T-cell (primary cell): ENCODE measurements at regions of chr15 and their contacts with region 1.

Region 1: DNA sequence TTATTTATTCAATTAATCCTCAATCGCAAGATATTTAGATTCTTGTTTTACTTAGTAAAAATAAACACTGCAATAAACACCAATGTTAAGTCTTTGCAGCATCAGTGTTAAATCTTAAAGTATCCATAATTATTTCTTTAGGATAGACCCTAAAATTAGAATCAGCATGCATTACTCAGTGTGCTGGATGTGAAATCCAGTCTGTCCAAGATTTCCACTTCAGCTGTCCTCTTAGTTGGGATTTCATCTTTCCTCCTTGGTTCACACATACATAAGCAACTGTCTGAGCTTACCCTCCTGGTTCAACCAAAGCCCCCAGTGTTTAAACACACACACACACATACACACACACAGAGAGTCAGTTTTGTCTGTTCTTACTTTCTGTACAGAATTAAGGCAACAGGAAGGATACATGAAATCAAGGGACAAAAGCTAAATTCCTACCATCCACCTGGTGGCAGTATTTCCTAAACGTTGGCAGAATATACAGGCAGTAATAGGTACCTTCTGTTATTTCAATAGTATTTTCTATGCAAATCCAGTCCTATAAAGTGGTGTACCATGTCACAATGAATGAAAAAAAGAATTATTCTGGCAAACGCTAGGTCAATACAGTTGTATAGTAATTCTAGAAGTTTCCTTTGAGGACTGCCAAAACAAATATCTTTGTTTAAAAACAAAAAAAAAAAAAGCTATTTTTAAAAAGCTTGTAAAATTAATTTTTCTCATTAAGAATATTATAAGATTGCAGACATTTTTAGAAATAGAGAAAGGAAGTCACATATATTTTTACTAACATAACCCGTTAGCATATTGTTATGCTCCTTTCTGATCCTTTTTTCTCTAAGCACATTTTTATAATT is 27.3 kb upstream of the DMXL2 start:
- DNase-seq: peak in 29 of 35 experiments; percentile 0 to 86 (median 29)
- ATAC-seq: peak; percentile 57 to 82 (median 74)
- H3K4me3 ChIP-seq: no peak overlapping the region
- H3K4me3 Mint-ChIP-seq: no peak overlapping the region
- H3K27ac ChIP-seq: no peak overlapping the region
- H3K27ac Mint-ChIP-seq: no peak overlapping the region
- H3K4me1 ChIP-seq: no peaks in the 10 kb centered on the region
- H3K4me1 Mint-ChIP-seq: no peaks in the 10 kb centered on the region
- H3K27me3 ChIP-seq: no peaks in the 10 kb centered on the region
- H3K27me3 Mint-ChIP-seq: peaks cover 0 to 5% of the 10 kb centered on the region in 2 donors

Region 2: DNA sequence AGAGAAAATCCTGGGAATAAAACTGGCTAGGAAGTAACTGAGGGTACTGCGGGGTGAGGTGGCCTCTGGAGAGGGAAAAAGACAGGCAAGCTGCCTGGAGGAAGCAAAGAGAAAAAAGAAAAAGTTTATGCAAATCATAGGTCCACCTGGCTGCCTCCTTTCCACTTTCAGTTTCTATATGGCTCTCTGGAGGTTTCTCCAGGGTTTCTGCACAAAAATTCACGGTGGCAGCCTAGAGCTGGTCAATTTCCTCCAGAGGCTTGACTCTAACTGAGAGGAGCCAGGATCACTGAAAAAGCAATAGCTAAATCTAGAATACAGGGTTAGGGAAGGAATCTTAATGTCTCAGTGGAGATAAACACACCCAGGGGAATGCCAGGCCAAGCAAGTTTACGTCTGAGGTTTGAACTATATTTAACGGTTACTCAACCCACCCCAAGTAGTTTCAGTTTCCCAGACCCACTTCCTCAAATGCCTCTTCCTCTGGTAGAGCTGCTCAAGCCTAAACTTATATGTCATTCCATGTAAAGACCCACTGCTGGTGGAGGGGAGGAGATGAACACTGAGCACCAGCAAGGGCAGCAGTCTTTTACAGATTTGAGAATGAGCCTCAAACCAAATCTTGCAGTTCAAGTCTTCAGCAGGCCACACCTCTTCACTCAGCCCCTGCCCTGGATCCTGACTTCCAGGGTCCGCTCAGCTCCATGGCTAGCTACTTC is 81.8 kb after region 1 on chr15:
- CTCF ChIA-PET with region 1: interaction called, 6 to 12 read pairs
- POLR2A ChIA-PET with region 1: interaction called in 1 of 2 experiments, 3 read pairs
- DNase-seq: peak in 28 of 35 experiments; percentile 7 to 80 (median 36)
- ATAC-seq: peak; percentile 65 to 81 (median 66)
- H3K4me3 ChIP-seq: peak overlapping the region; percentile 35 to 39
- H3K4me3 Mint-ChIP-seq: peak overlapping the region; percentile 79 to 84 (median 83)
- H3K27ac ChIP-seq: peak overlapping the region; percentile 92
- H3K27ac Mint-ChIP-seq: peak overlapping the region; percentile 95 to 97
- H3K4me1 ChIP-seq: peaks cover 51 to 76% of the 10 kb centered on the region in 2 experiments
- H3K4me1 Mint-ChIP-seq: peaks cover 87 to 93% (median 91%) of the 10 kb centered on the region in 3 donors
- H3K27me3 ChIP-seq: no peaks in the 10 kb centered on the region
- H3K27me3 Mint-ChIP-seq: no peaks in the 10 kb centered on the region

Region 3: DNA sequence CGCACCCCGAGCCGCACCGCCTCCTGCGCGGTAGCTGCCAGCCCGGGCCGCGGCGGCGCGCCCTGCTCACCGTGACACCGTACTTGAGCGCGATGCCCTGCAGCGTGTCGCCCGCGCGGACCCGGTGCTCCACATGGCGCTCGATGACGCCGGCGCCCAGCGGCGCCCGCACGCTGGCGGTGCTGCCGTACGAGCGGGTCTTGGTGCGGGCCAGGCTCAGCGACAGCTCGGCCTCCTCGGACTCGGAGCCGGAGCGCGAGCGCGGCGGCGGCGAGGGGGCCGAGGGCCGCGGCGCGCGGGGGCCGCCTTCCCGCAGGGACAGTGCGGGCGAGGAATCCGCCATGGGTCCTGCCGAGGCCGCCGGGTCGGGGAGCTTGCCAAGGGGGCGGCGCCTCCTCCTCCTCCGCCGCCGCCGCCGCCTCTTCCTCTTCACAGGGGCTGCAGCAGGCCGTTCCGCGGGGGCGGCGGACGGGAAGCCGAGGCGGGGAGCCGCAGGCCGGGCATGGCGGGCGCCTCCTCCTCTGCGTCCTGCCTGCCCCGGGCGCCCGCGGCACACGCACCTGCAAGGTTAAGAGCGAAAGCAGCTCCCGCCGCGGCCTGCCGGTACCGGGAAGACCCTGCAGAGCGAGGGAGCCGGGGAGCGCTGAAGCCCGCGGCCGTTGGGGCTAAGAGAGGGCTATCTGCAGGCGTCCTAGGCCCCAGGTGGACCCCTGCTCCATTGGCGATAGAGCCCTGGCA is 87.6 kb after region 1 on chr15 and contains the start of gene LYSMD2:
- CTCF ChIA-PET with region 1: interaction called, 6 to 12 read pairs
- POLR2A ChIA-PET with region 1: interaction called in 1 of 2 experiments, 3 read pairs
- DNase-seq: peak; percentile 21 to 78 (median 57)
- ATAC-seq: peak; percentile 67 to 79 (median 74)
- H3K4me3 ChIP-seq: peak within 1 kb of the TSS; percentile 62 to 67
- H3K4me3 Mint-ChIP-seq: peak within 1 kb of the TSS; percentile 85 to 91 (median 90)
- H3K27ac ChIP-seq: peak within 1 kb of the TSS; percentile 90
- H3K27ac Mint-ChIP-seq: peak within 1 kb of the TSS; percentile 97
- H3K4me1 ChIP-seq: peaks cover 41 to 54% of the 10 kb centered on the region in 2 experiments
- H3K4me1 Mint-ChIP-seq: peaks cover 60 to 65% (median 63%) of the 10 kb centered on the region in 3 donors
- H3K27me3 ChIP-seq: no peaks in the 10 kb centered on the region
- H3K27me3 Mint-ChIP-seq: no peaks in the 10 kb centered on the region
- total RNA-seq, gene LYSMD2: 16.6 to 36.2 (median 26.2) TPM

Region 4: DNA sequence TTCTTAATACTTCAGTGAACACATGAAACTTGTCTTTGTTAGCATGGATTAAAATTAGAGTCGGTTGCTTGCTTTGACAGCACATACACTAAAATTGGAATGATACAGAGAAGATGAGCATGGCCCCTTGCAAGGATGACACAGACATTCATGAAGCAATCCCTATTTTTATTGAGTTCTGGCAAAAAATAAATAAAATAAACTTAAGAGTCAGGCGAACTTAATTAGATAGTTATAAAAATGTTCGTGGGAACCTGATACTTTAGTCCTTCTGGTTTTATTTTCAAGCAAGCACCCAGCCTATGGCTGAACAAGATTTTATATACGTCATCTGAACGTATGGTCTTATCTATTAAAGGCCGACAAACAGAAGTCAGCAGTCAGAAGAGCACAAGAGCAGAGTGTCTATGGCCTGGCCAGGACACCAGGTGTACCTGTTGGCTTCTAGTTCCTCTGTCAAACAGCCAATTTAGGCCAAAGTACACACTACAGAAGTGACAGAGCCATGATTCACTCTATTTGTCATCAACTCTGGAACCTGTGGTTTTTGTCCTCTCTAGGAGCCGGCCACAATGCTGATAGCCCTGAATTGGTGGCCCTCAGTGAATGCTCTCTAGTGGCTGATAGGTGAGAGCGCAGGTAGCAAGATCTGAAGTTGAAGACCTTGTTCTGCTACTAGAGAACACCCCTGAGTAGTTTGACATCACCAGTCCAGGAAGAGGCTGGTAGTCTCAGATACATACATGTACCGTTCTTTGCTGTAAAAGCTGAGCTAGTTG is 257.4 kb after region 1 on chr15:
- CTCF ChIA-PET with region 1: interaction called in 1 of 2 experiments, 13 read pairs
- POLR2A ChIA-PET with region 1: no interaction called
- DNase-seq: no peak
- ATAC-seq: no peak
- H3K4me3 ChIP-seq: no peak overlapping the region
- H3K4me3 Mint-ChIP-seq: no peak overlapping the region
- H3K27ac ChIP-seq: no peak overlapping the region
- H3K27ac Mint-ChIP-seq: no peak overlapping the region
- H3K4me1 ChIP-seq: no peaks in the 10 kb centered on the region
- H3K4me1 Mint-ChIP-seq: no peaks in the 10 kb centered on the region
- H3K27me3 ChIP-seq: no peaks in the 10 kb centered on the region
- H3K27me3 Mint-ChIP-seq: no peaks in the 10 kb centered on the region